ENCODE measurements at regions of chr5 and their contacts with region 1.

Region 1: GRCh38 chr5:128965638-128966302 is 482 bp downstream of the SLC27A6 start:
- DNase-seq: no peak
- ATAC-seq: peak; percentile 46

Region 2: GRCh38 chr5:128927644-128928043 is 38.1 kb before region 1 on chr5:
- intact Hi-C with region 1: loop called (anchors 2 kb)
- DNase-seq: no peak
- ATAC-seq: no peak

Region 3: DNA sequence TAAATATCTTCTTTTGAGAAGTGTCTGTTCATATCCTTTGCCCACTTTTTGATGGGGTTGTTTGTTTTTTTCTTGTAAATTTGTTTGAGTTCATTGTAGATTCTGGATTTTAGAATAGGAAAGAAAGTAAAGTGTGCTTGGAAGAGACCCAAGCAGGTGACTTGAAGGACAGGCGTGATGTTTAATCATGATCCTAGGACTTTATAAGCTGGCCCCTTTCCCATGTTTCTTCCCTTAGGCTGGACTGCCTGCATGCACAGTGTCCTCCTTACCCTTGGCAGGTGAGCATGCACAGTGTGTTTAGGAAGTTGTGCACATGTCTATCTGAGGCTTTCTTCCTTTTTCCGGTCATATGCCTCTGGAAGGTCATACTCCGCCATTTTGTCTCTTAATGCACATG is 190.1 kb after region 1 on chr5:
- intact Hi-C with region 1: no loop called
- DNase-seq: no peak
- ATAC-seq: no peak